ENCODE measurements at regions of chr22 and their contacts with region 1.

Region 1: DNA sequence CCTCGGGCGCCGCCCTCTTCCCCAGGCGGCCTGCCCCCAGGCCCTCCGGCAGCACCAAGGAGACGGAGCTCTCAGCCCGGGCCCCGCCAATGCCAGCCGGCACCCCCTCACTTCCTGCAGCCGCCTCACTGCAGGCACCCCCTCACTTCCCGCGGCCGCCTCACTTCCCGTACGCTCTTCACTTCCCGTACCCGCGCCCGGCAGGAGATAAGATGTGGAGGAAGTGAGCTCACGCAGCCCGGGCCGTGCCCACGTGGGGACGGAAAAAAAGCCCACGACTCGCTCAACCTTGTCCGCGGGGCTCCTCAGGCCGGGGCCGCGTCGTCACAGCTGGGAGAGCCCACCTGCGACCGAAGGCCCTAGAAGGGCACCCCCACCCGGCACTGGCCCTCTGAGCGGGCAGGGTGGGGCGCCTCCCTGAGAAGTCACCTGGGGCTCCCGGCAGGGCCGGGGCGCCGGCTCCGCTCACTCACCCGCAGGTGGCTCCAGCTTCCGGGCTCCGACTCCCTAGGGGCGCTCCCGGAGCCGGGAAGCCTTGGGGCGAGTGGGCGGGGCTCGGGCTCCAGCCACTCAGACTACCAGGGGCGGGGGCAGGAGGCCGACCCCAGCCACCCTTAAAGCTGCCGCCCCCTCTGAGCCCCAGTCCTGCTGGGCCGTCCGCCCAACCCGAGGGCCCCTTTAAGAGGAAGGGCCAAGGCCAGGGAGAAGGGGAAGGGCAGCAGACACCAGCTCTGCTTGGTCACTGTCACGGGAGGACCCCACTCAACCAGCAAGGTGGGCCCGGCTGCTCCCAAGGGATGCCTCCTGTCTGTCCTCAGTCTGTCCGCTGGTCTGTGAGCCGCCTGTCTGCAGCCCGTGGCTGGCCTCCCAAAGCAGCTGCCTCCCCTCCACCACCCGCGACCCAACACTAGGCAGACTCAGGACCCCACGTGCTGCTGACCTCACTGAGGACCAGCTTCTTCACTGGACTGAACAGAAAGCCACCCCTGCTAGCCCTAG is 31.4 kb downstream of the PISD start:
- DNase-seq: peak; percentile 98
- ATAC-seq: peak; percentile 82
- H3K4me3 ChIP-seq: peak overlapping the region in 4 of 5 experiments; percentile 60 to 79 (median 66)
- H3K4me3 Mint-ChIP-seq: peak overlapping the region; percentile 92
- H3K27ac ChIP-seq: peak overlapping the region; percentile 95 to 98
- H3K27ac Mint-ChIP-seq: peak overlapping the region; percentile 96
- H3K4me1 ChIP-seq: peaks cover 23 to 58% of the 10 kb centered on the region in 2 donors
- H3K4me1 Mint-ChIP-seq: peaks cover 65% of the 10 kb centered on the region
- H3K27me3 ChIP-seq: no peaks in the 10 kb centered on the region
- H3K27me3 Mint-ChIP-seq: no peaks in the 10 kb centered on the region
- CTCF ChIP-seq: no peak

Region 2: GRCh38 chr22:30423982-30424963 is 1206.4 kb before region 1 on chr22:
- CTCF ChIA-PET with region 1: no interaction called
- POLR2A ChIA-PET with region 1: no interaction called
- intact Hi-C with region 1: loop called (anchors 10 kb)
- DNase-seq: peak; percentile 99
- ATAC-seq: peak; percentile 91
- H3K4me3 ChIP-seq: peak overlapping the region; percentile 54 to 84 (median 76)
- H3K4me3 Mint-ChIP-seq: peak overlapping the region; percentile 99
- H3K27ac ChIP-seq: peak overlapping the region; percentile 78 to 89
- H3K27ac Mint-ChIP-seq: peak overlapping the region; percentile 100
- H3K4me1 ChIP-seq: peaks cover 22 to 40% of the 10 kb centered on the region in 2 donors
- H3K4me1 Mint-ChIP-seq: peaks cover 48% of the 10 kb centered on the region
- H3K27me3 ChIP-seq: no peaks in the 10 kb centered on the region
- H3K27me3 Mint-ChIP-seq: no peaks in the 10 kb centered on the region
- CTCF ChIP-seq: no peak

Region 3: GRCh38 chr22:31345331-31346254 is 285.0 kb before region 1 on chr22:
- CTCF ChIA-PET with region 1: interaction called, 5 read pairs
- POLR2A ChIA-PET with region 1: interaction called, 4 read pairs
- intact Hi-C with region 1: loop called (anchors 2 kb)
- DNase-seq: peak; percentile 94
- ATAC-seq: peak; percentile 65
- H3K4me3 ChIP-seq: peak overlapping the region in 4 of 5 experiments; percentile 62 to 74 (median 70)
- H3K4me3 Mint-ChIP-seq: peak overlapping the region; percentile 81
- H3K27ac ChIP-seq: peak overlapping the region; percentile 36 to 63
- H3K27ac Mint-ChIP-seq: peak overlapping the region; percentile 86
- H3K4me1 ChIP-seq: peaks cover 32 to 53% of the 10 kb centered on the region in 2 donors
- H3K4me1 Mint-ChIP-seq: peaks cover 51% of the 10 kb centered on the region
- H3K27me3 ChIP-seq: no peaks in the 10 kb centered on the region
- H3K27me3 Mint-ChIP-seq: no peaks in the 10 kb centered on the region
- CTCF ChIP-seq: peak; percentile 79

Region 4: DNA sequence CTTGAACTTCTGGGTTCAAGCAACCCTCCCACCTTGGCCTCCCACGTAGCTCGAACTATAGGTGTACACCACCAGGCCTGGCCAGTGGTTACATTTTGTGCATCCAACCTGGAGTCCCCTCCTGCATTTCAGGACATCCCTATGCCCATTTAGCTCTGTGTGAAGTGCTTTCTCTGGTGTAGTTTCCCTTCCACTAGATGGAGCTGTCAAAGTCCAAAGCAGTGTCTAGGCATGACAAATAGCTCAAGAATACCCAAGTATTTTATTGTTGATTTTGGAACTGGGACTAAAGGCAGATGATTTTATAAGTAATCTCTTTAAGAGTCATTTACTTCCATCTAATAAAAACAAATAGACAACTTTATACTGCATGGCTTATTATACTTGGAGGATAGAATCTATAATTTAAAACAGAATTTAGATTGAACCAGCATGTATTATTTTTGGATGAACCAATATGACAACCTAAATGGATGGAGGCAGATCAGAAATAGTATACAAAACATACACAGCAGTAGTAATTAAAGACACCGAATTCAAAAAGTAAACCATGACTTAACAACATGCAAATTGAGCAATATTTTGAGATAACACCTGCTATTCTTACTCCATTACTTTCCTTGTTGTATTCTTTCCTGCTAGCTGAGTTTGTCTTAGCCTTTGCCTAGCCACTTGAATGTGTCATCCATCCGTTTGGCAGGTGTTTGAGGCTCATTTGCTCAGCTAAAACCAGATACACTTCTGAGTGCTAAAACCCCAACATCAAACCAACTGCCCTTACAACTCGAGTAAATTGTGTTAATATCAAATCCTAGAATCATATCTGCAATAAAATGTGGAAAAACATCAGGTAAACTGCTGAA is 178.7 kb before region 1 on chr22:
- CTCF ChIA-PET with region 1: interaction called, 58 read pairs
- POLR2A ChIA-PET with region 1: no interaction called
- intact Hi-C with region 1: loop called (anchors 1 kb)
- DNase-seq: peak; percentile 54
- ATAC-seq: peak; percentile 49
- H3K4me3 ChIP-seq: no peak overlapping the region
- H3K4me3 Mint-ChIP-seq: no peak overlapping the region
- H3K27ac ChIP-seq: no peak overlapping the region
- H3K27ac Mint-ChIP-seq: no peak overlapping the region
- H3K4me1 ChIP-seq: peaks cover 8 to 11% of the 10 kb centered on the region in 2 donors
- H3K4me1 Mint-ChIP-seq: peaks cover 19% of the 10 kb centered on the region
- H3K27me3 ChIP-seq: no peaks in the 10 kb centered on the region
- H3K27me3 Mint-ChIP-seq: no peaks in the 10 kb centered on the region
- CTCF ChIP-seq: peak; percentile 56

Region 5: GRCh38 chr22:31496007-31496734 is 134.5 kb before region 1 on chr22 and contains the start of gene SFI1:
- CTCF ChIA-PET with region 1: interaction called, 7 read pairs
- POLR2A ChIA-PET with region 1: interaction called, 5 read pairs
- intact Hi-C with region 1: loop called (anchors 1 kb)
- DNase-seq: peak; percentile 97
- ATAC-seq: peak; percentile 87
- H3K4me3 ChIP-seq: peak within 1 kb of the TSS; percentile 71 to 88 (median 80)
- H3K4me3 Mint-ChIP-seq: peak within 1 kb of the TSS; percentile 97
- H3K27ac ChIP-seq: peak within 1 kb of the TSS; percentile 83 to 85
- H3K27ac Mint-ChIP-seq: peak within 1 kb of the TSS; percentile 97
- H3K4me1 ChIP-seq: peaks cover 25 to 45% of the 10 kb centered on the region in 2 donors
- H3K4me1 Mint-ChIP-seq: peaks cover 39% of the 10 kb centered on the region
- H3K27me3 ChIP-seq: no peaks in the 10 kb centered on the region
- H3K27me3 Mint-ChIP-seq: no peaks in the 10 kb centered on the region
- CTCF ChIP-seq: peak; percentile 34
- total RNA-seq, gene SFI1: 182 and 191 TPM in 2 replicates

Region 6: GRCh38 chr22:31595271-31595670 is 35.4 kb before region 1 on chr22:
- CTCF ChIA-PET with region 1: no interaction called
- POLR2A ChIA-PET with region 1: no interaction called
- intact Hi-C with region 1: no loop called
- DNase-seq: no peak
- ATAC-seq: no peak
- H3K4me3 ChIP-seq: no peak overlapping the region
- H3K4me3 Mint-ChIP-seq: no peak overlapping the region
- H3K27ac ChIP-seq: no peak overlapping the region
- H3K27ac Mint-ChIP-seq: no peak overlapping the region
- H3K4me1 ChIP-seq: no peaks in the 10 kb centered on the region
- H3K4me1 Mint-ChIP-seq: no peaks in the 10 kb centered on the region
- H3K27me3 ChIP-seq: no peaks in the 10 kb centered on the region
- H3K27me3 Mint-ChIP-seq: no peaks in the 10 kb centered on the region
- CTCF ChIP-seq: no peak

Region 7: GRCh38 chr22:31652911-31653684 is 22.5 kb after region 1 on chr22:
- CTCF ChIA-PET with region 1: interaction called, 13 read pairs
- POLR2A ChIA-PET with region 1: interaction called, 5 read pairs
- intact Hi-C with region 1: no loop called
- DNase-seq: no peak
- ATAC-seq: no peak
- H3K4me3 ChIP-seq: no peak overlapping the region
- H3K4me3 Mint-ChIP-seq: peak overlapping the region; percentile 26
- H3K27ac ChIP-seq: peak overlapping the region in 1 of 2 donors; percentile 17
- H3K27ac Mint-ChIP-seq: peak overlapping the region; percentile 10
- H3K4me1 ChIP-seq: peaks cover 16 to 33% of the 10 kb centered on the region in 2 donors
- H3K4me1 Mint-ChIP-seq: peaks cover 54% of the 10 kb centered on the region
- H3K27me3 ChIP-seq: no peaks in the 10 kb centered on the region
- H3K27me3 Mint-ChIP-seq: no peaks in the 10 kb centered on the region
- CTCF ChIP-seq: no peak

Measured in B cell (primary cell).